ENCODE measurements at regions of chr16 and their contacts with region 1.

Region 1: GRCh38 chr16:56317998-56318826 is 107.1 kb downstream of the AMFR start:
- DNase-seq: peak; percentile 78 to 90 (median 83)
- H3K4me3 ChIP-seq: peak overlapping the region; percentile 25
- H3K27ac ChIP-seq: no peak overlapping the region
- H3K4me1 ChIP-seq: peaks cover 5% of the 10 kb centered on the region
- H3K27me3 ChIP-seq: no peaks in the 10 kb centered on the region
- CTCF ChIP-seq: peak; percentile 82 to 93 (median 87)
- EP300 ChIP-seq: no peak
- POLR2A ChIP-seq: no peak

Region 2: GRCh38 chr16:55938126-55938525 is 380.1 kb before region 1 on chr16:
- intact Hi-C with region 1: loop called in 3 of 4 experiments (anchors 5 to 10 kb)
- DNase-seq: no peak
- H3K4me3 ChIP-seq: no peak overlapping the region
- H3K27ac ChIP-seq: no peak overlapping the region
- H3K4me1 ChIP-seq: no peaks in the 10 kb centered on the region
- H3K27me3 ChIP-seq: no peaks in the 10 kb centered on the region
- CTCF ChIP-seq: no peak
- EP300 ChIP-seq: no peak
- POLR2A ChIP-seq: no peak

Region 3: GRCh38 chr16:55944377-55944802 is 373.8 kb before region 1 on chr16:
- intact Hi-C with region 1: loop called (anchors 2 to 10 kb)
- DNase-seq: peak; percentile 31 to 68 (median 56)
- H3K4me3 ChIP-seq: no peak overlapping the region
- H3K27ac ChIP-seq: no peak overlapping the region
- H3K4me1 ChIP-seq: no peaks in the 10 kb centered on the region
- H3K27me3 ChIP-seq: no peaks in the 10 kb centered on the region
- CTCF ChIP-seq: peak in 2 of 3 donors; percentile 47 to 52
- EP300 ChIP-seq: no peak
- POLR2A ChIP-seq: no peak

Measured in ovary (tissue), 10 donors.